T-cell (primary cell): ENCODE measurements at regions of chr20 and their contacts with region 1.

Region 1: GRCh38 chr20:62773845-62774714 is 22.2 kb upstream of the MRGBP start:
- DNase-seq: no peak
- ATAC-seq: no peak
- H3K4me3 ChIP-seq: no peak overlapping the region
- H3K4me3 Mint-ChIP-seq: peak overlapping the region in 1 of 3 donors; percentile 70
- H3K27ac ChIP-seq: peak overlapping the region; percentile 94
- H3K27ac Mint-ChIP-seq: peak overlapping the region; percentile 92 to 93
- H3K4me1 ChIP-seq: peaks cover 23 to 67% of the 10 kb centered on the region in 2 experiments
- H3K4me1 Mint-ChIP-seq: peaks cover 45 to 63% (median 63%) of the 10 kb centered on the region in 3 donors
- H3K27me3 ChIP-seq: no peaks in the 10 kb centered on the region
- H3K27me3 Mint-ChIP-seq: no peaks in the 10 kb centered on the region

Region 2: DNA sequence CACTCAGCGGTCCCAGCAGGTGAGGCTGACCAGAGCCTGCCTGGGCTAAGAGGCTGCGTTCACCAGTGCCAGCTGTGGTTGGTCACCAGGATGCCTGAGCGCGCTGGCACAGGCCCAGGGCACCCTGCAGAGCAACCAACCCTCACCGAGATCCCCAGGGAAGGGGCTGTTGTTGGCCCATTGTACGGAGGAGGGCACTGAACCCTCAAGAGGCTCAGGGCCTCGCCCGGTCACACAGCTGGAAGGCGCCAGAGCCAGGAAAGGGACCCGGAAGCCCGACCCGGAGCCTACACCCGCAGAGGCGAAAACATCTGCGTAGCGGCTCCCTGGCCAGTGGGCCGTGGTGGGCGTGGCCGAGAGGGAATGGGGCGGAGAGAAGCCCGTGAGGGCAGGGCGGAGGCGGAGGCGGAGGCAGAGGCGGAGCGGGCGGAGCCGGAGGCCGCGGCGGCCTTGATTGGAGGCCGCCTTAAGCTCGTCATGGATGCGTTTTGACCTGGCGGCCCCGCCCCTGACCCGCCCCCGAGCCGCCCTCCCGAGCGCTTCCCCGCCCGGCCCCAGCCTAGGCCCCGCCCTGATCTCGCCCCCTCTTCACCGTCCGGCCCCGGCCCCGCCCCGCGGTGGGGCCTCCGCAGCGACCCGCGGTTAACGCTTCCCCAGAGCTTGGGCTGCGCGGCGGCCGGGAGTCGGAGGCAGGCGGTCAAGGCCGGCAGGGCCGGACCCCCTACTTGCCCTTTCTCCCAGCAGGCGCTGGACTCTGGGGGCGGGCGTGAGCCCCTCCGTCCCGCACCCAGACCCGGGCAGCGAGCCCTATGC is 20.0 kb after region 1 on chr20:
- CTCF ChIA-PET with region 1: interaction called in 1 of 2 experiments, 12 read pairs
- POLR2A ChIA-PET with region 1: no interaction called
- DNase-seq: peak; percentile 72 to 97 (median 86)
- ATAC-seq: peak; percentile 76 to 80 (median 76)
- H3K4me3 ChIP-seq: peak overlapping the region; percentile 72 to 81
- H3K4me3 Mint-ChIP-seq: peak overlapping the region; percentile 85 to 91 (median 86)
- H3K27ac ChIP-seq: peak overlapping the region; percentile 99
- H3K27ac Mint-ChIP-seq: peak overlapping the region; percentile 93 to 96
- H3K4me1 ChIP-seq: peaks cover 15 to 57% of the 10 kb centered on the region in 2 experiments
- H3K4me1 Mint-ChIP-seq: peaks cover 38 to 41% (median 38%) of the 10 kb centered on the region in 3 donors
- H3K27me3 ChIP-seq: peaks cover 0 to 4% of the 10 kb centered on the region in 2 experiments
- H3K27me3 Mint-ChIP-seq: no peaks in the 10 kb centered on the region

Region 3: DNA sequence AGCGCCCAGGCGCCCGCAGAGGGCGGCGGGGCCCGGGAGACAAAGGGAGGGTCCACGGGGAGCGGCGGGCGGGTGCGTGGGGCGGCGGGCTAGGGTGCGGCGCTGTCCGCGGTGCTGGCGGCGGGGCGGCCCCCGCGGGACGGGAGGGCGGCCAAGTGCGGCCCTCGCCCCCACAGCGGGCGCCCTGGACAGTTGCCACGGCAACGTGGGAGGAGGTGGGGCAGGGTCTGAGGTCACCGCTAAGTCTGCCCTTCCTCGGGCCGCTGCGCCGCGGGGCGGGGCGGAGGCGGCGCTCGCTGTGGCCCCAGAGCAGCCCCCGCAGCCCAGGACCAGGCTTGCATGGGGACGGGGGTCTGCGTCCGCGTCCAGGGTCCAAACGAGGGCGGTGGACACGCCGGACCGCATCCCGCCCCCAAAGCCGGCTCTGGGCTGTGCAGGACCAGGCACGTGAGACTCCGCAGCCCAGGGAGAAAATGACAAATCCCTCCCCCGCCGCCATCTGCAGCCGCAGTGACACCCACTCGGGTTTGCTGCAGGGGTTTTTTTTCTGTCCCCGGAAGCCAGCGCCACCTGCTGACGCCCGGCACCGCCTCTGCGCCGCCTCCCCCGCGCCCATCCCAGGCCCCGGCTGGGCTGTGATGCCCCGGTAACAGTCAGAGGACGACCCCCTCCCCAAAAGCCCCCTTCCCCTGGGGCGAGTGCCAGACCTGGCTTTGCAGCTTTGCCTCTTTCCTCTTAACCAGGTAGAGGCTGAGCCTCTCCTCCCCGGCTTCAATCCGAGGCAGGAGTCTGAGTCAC is 405.0 kb after region 1 on chr20:
- CTCF ChIA-PET with region 1: no interaction called
- POLR2A ChIA-PET with region 1: no interaction called
- DNase-seq: peak; percentile 25 to 81 (median 69)
- ATAC-seq: peak; percentile 77 to 87 (median 83)
- H3K4me3 ChIP-seq: peak overlapping the region; percentile 38 to 64
- H3K4me3 Mint-ChIP-seq: peak overlapping the region in 2 of 3 donors; percentile 67 to 68
- H3K27ac ChIP-seq: no peak overlapping the region
- H3K27ac Mint-ChIP-seq: no peak overlapping the region
- H3K4me1 ChIP-seq: peaks cover 2 to 33% of the 10 kb centered on the region in 2 experiments
- H3K4me1 Mint-ChIP-seq: peaks cover 6 to 19% (median 12%) of the 10 kb centered on the region in 3 donors
- H3K27me3 ChIP-seq: peaks cover 1 to 86% of the 10 kb centered on the region in 2 experiments
- H3K27me3 Mint-ChIP-seq: peaks cover 20 to 56% of the 10 kb centered on the region in 2 donors